ENCODE measurements at regions of chr15 and their contacts with region 1.

Region 1: GRCh38 chr15:84748274-84749110 is at the start of gene ZNF592:
- DNase-seq: peak; percentile 59 to 67 (median 63)
- H3K4me3 ChIP-seq: peak within 1 kb of the TSS; percentile 72 to 100 (median 96)
- H3K4me3 Mint-ChIP-seq: peak within 1 kb of the TSS; percentile 97 to 99
- H3K27ac ChIP-seq: peak within 1 kb of the TSS; percentile 95 to 97
- H3K27ac Mint-ChIP-seq: peak within 1 kb of the TSS; percentile 98 to 100 (median 99)
- H3K4me1 ChIP-seq: peaks cover 47 to 59% of the 10 kb centered on the region in 2 donors
- H3K4me1 Mint-ChIP-seq: peaks cover 66% of the 10 kb centered on the region
- H3K27me3 ChIP-seq: no peaks in the 10 kb centered on the region
- H3K27me3 Mint-ChIP-seq: no peaks in the 10 kb centered on the region
- CTCF ChIP-seq: peak; percentile 7
- polyA plus RNA-seq, gene ZNF592: 2.8 to 43.6 (median 5.0) TPM

Region 2: DNA sequence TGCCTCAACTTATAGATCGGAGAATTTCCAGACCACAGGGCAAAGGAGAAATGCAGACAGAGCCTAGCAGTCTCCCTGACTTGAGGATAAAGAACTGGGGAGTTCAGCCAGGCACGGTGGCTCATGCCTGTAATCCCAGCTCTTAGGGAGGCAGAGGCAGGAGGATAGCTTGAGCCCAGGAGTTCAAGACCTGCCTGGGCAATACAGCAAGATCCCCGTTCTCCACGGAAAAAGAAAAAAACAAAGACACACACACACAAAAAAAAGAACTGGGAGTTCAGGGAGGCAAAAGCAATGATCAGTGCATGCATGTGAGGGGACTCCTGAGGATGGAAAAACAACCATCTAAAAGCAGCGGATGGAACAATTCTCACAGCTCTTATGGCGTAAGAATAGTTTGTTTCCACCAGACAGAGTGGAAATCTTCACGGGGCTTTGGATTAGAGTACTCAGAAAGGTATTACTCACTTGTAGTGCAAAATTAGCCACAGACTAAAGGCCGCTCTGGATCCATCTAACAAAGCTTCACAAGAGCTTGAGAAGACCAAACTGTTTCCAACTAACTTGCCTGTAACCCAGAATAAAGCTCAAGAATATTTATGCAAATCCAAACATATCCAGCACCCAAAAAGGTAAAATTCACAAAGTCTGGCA is 48.8 kb before region 1 on chr15:
- intact Hi-C with region 1: loop called in 1 of 2 experiments (anchors 10 kb)
- DNase-seq: no peak
- H3K4me3 ChIP-seq: no peak overlapping the region
- H3K4me3 Mint-ChIP-seq: no peak overlapping the region
- H3K27ac ChIP-seq: no peak overlapping the region
- H3K27ac Mint-ChIP-seq: peak overlapping the region in 4 of 7 donors; percentile 1 to 53 (median 38)
- H3K4me1 ChIP-seq: peaks cover 11 to 24% of the 10 kb centered on the region in 2 donors
- H3K4me1 Mint-ChIP-seq: peaks cover 23% of the 10 kb centered on the region
- H3K27me3 ChIP-seq: no peaks in the 10 kb centered on the region
- H3K27me3 Mint-ChIP-seq: no peaks in the 10 kb centered on the region
- CTCF ChIP-seq: no peak

Region 3: DNA sequence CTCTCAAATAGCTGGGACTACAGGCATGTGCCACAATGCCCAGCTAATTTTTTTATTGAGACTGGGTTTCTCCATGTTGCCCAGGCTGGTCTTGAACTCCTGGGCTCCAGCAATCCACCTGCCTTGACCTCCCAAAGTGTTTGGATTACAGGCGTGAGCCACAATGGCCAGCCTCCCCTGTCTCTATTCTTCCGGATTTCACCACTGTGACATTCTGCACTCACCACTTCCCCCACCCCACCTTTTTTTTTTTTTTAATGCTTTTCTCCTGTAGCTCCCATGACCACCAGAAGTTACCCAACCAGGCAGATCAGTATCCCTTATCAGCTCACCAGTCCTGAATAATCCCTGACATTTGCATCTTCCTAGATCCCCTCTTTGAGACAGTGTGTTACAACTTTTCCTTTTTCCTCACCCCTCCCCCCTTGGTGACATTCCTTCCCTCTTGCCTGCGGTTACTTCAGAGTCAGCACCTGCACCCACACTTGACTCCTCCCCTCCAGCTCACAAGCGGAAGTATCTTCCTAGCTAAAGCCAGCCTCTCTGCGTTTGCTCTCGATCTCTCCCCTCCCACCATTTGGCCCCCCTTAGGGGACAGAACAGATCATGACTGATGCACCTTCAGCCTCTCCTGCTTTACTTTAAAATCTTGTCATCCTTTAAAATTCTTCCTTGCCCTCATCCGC is 13.6 kb before region 1 on chr15:
- intact Hi-C with region 1: loop called in 1 of 2 experiments (anchors 1 kb)
- DNase-seq: peak; percentile 78 to 82 (median 78)
- H3K4me3 ChIP-seq: peak overlapping the region; percentile 20 to 71 (median 32)
- H3K4me3 Mint-ChIP-seq: peak overlapping the region; percentile 79 to 93
- H3K27ac ChIP-seq: peak overlapping the region; percentile 85 to 99
- H3K27ac Mint-ChIP-seq: peak overlapping the region; percentile 97 to 99 (median 98)
- H3K4me1 ChIP-seq: peaks cover 58 to 72% of the 10 kb centered on the region in 2 donors
- H3K4me1 Mint-ChIP-seq: peaks cover 61% of the 10 kb centered on the region
- H3K27me3 ChIP-seq: no peaks in the 10 kb centered on the region
- H3K27me3 Mint-ChIP-seq: no peaks in the 10 kb centered on the region
- CTCF ChIP-seq: no peak

Measured in CD14-positive monocyte (primary cell).